Dendritic cell treated with granulocyte-macrophage colony-stimulating factor and Interleukin-4, amounts not matched to agents 40 ng/mL and 50 ng/mL, for 4 days (primary cell): ENCODE measurements at regions of chr12 and their contacts with region 1.

Region 1: DNA sequence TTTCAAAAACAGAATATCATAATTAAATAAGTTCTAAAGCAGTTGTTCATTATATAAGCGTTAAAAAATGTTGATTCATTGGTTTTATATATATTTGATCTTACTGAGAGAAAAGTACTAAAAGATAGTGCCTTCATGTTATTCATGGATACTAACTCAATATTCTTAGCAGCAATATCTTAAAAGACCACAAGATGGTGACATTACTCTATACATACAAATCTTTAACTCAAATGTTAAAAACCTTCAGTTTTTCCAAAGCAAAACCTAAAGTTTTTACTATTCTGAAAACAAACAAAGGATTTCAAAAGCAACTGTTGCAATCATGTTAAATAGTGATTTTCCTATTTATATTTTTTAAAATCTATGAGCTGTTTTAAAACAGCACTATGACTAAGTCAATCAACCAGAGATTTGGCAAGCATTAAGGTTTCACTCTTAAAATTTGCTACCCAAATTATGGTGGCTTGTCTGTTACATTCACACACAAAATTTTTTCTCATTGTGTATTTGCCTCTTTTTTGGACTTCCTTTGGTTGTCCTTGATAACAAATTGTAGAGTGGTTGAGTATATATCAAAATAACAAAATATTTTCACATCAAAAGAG is 50.1 kb upstream of the RERGL start:
- H3K4me3 Mint-ChIP-seq: no peak overlapping the region
- H3K27ac Mint-ChIP-seq: no peak overlapping the region
- H3K4me1 Mint-ChIP-seq: peaks cover 5% of the 10 kb centered on the region
- H3K27me3 Mint-ChIP-seq: no peaks in the 10 kb centered on the region

Region 2: DNA sequence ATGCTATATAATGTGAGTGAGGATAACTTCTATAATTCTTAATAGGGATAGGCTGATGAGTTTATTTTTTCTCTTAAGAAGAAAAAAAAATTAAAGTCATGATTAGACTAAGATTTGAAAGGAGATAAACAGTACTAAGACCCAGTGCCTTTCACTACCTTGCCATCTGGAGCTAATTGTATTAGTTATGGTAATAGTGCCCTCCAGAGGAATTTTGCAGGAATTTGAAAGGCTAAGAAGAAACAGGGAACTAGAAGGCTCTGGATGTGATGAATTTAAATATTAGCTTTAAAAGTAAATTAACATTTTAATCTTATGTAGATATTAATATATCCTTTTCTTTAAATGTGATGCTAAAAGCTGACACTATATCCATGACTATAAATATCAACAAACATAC is 84.7 kb after region 1 on chr12:
- intact Hi-C with region 1: loop called (anchors 5 kb)
- H3K4me3 Mint-ChIP-seq: no peak overlapping the region
- H3K27ac Mint-ChIP-seq: no peak overlapping the region
- H3K4me1 Mint-ChIP-seq: no peaks in the 10 kb centered on the region
- H3K27me3 Mint-ChIP-seq: no peaks in the 10 kb centered on the region

Region 3: DNA sequence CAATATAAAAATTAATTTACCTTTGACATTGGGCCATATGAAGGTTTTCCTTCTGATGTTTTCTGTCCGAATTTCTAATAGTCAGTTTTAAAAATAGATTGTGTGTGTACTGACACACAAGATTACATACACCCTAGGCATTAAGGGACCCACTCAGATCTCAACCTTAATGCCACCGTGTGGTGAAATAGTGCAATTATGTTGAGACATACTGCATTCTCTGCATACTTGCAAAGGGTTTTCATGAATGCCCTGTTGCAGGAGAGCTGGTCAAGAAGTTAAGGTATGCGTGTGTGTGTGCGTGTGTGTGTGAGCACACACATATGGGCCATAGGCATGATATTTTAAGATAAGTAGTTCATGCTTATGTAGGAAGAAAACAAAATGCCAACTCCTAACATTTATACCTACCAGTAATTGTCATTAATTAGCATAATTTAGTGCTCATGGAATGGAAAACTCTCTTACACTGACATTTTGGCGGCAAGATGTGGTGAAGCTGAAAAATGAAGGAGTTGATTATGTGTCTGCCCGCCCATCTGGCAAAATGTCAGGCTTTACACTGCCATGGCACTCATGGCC is 180.0 kb after region 1 on chr12:
- intact Hi-C with region 1: loop called (anchors 1 kb)
- H3K4me3 Mint-ChIP-seq: no peak overlapping the region
- H3K27ac Mint-ChIP-seq: no peak overlapping the region
- H3K4me1 Mint-ChIP-seq: no peaks in the 10 kb centered on the region
- H3K27me3 Mint-ChIP-seq: no peaks in the 10 kb centered on the region